ENCODE measurements at regions of chr20 and their contacts with region 1.

Region 1: DNA sequence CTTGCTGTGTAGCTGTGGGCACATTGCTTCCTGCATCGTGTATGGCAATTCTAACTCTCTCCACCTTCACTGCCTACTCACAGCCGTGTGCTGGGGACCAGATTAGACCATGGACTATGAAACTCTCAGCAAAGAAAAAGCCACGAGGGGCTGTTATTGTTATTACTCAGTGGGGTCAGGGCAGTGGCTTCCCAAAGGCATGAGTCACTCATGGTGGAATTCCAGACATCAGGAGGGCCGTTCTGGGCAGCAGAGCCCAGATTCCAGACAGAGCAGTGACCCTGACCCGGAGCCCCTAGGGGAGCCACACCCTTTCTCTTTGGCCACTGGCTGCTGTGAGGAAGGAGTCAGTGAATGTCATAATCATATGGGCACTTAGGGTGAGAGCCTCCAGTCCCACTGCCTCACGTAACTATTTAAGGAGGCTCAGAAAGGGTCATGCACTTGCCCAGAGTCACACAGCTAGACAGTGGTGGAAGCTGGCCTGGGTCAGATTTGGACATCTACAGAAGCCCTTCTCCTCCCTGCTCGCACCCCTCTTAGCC is 22.2 kb upstream of the CCN5 start:
- DNase-seq: peak; percentile 90
- H3K4me3 Mint-ChIP-seq: no peak overlapping the region
- H3K27ac Mint-ChIP-seq: peak overlapping the region; percentile 88
- H3K4me1 Mint-ChIP-seq: peaks cover 62% of the 10 kb centered on the region
- H3K27me3 Mint-ChIP-seq: no peaks in the 10 kb centered on the region
- CTCF ChIP-seq: no peak

Region 2: GRCh38 chr20:43530321-43531090 is 1162.5 kb before region 1 on chr20:
- CTCF ChIA-PET with region 1: no interaction called
- intact Hi-C with region 1: no loop called
- DNase-seq: no peak
- H3K4me3 Mint-ChIP-seq: no peak overlapping the region
- H3K27ac Mint-ChIP-seq: no peak overlapping the region
- H3K4me1 Mint-ChIP-seq: peaks cover 8% of the 10 kb centered on the region
- H3K27me3 Mint-ChIP-seq: no peaks in the 10 kb centered on the region
- CTCF ChIP-seq: no peak

Region 3: GRCh38 chr20:44622501-44623270 is 70.3 kb before region 1 on chr20:
- CTCF ChIA-PET with region 1: no interaction called
- intact Hi-C with region 1: no loop called
- DNase-seq: no peak
- H3K4me3 Mint-ChIP-seq: no peak overlapping the region
- H3K27ac Mint-ChIP-seq: no peak overlapping the region
- H3K4me1 Mint-ChIP-seq: peaks cover 9% of the 10 kb centered on the region
- H3K27me3 Mint-ChIP-seq: no peaks in the 10 kb centered on the region
- CTCF ChIP-seq: no peak

Region 4: DNA sequence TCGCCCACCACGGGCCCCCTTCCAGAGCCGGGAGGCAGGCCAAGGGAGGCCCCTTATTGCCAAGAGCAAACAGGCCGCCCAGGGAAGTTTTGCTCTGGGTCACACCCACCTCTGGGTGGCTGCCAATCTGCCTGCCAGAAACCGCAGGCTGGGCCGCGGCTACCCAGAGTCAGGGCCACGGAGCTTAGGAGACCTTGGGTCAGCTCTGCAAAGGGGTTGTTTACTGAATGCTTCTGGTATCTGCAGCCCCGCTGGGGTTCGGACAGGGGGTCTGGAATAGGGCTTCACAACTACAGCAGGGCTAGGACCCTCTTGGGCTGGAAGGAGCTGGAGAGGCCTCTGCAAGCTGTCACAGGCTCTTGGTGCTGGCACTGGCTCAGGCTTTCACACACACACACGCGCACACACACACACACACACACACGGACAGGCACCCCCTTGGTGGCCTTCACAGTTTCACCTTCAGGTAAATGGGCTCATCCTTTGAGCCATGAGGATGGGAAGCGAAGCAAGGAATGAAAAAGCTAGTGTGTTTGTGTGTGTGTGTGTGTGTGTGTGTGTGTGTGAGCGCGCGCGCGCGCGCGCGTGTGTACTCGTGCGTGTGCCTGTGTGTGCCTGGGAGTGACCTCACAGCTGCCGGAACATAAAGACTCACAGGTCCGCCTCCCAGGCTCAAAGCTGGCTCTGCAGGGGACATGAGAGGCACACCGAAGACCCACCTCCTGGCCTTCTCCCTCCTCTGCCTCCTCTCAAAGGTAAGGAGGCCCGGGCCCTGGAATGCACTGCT is 21.9 kb after region 1 on chr20 and contains the start of gene CCN5:
- CTCF ChIA-PET with region 1: interaction called, 5 read pairs
- intact Hi-C with region 1: loop called (anchors 1 kb)
- DNase-seq: peak; percentile 94
- H3K4me3 Mint-ChIP-seq: peak within 1 kb of the TSS; percentile 17
- H3K27ac Mint-ChIP-seq: peak within 1 kb of the TSS; percentile 18
- H3K4me1 Mint-ChIP-seq: peaks cover 48% of the 10 kb centered on the region
- H3K27me3 Mint-ChIP-seq: no peaks in the 10 kb centered on the region
- CTCF ChIP-seq: no peak
- total RNA-seq, gene CCN5: 0.94 and 1.9 TPM in 2 replicates

Region 5: DNA sequence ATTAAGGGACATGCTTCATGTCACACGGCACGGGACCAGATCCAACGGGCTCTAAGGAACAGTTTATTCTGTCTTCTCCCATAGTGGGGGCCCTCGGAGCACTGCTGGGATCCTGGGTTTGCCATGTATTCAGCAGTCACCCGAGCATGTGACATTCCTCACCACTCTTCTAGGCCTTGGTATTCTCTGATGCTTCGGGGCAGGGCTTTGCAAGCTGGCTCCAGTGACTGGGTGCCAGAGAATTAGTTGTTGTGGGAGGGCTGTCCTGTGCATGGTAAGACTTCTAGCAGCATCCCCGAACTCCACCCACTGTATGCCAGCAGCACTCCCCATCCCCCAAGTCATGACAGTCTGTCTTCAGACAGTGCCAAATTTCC is 27.6 kb after region 1 on chr20:
- CTCF ChIA-PET with region 1: interaction called, 5 read pairs
- intact Hi-C with region 1: loop called (anchors 2 kb)
- DNase-seq: peak; percentile 69
- H3K4me3 Mint-ChIP-seq: no peak overlapping the region
- H3K27ac Mint-ChIP-seq: peak overlapping the region; percentile 1
- H3K4me1 Mint-ChIP-seq: peaks cover 56% of the 10 kb centered on the region
- H3K27me3 Mint-ChIP-seq: no peaks in the 10 kb centered on the region
- CTCF ChIP-seq: no peak

Region 6: DNA sequence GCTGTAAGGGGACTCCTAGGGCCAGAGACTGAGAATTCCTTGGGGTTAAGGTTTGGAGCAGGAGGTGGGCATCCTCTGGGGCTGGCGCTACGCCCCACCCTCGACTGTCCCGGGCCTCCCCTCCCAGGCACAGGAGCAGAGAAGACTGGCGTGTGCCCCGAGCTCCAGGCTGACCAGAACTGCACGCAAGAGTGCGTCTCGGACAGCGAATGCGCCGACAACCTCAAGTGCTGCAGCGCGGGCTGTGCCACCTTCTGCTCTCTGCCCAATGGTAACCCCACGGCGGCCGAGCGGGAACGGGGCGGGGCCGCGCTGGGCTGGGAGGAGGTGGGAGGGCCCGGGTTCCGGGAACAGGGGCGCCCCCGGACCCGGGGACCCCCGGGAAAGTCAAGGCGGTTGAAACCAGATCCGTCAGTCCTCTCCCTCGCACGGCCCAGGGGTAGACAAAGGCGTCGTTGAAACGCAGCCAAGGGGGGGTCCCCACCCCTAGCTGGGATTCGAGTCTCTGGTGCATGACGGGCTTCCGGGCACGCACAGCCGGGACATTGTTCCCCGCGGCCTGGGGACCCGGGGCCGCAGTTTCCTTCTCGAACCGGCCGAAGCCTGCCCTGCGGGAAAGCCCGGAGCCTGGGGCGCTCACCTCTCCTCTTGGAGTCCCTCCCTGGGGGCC is 777.4 kb after region 1 on chr20:
- CTCF ChIA-PET with region 1: no interaction called
- intact Hi-C with region 1: no loop called
- DNase-seq: peak; percentile 81
- H3K4me3 Mint-ChIP-seq: peak overlapping the region; percentile 89
- H3K27ac Mint-ChIP-seq: peak overlapping the region; percentile 46
- H3K4me1 Mint-ChIP-seq: peaks cover 31% of the 10 kb centered on the region
- H3K27me3 Mint-ChIP-seq: peaks cover 9% of the 10 kb centered on the region
- CTCF ChIP-seq: no peak